ENCODE measurements at regions of chr6 and their contacts with region 1.

Region 1: GRCh38 chr6:30533460-30534294 is 22.6 kb downstream of the GNL1 start:
- H3K4me3 Mint-ChIP-seq: no peak overlapping the region
- H3K27ac Mint-ChIP-seq: no peak overlapping the region
- H3K4me1 Mint-ChIP-seq: peaks cover 30% of the 10 kb centered on the region
- H3K27me3 Mint-ChIP-seq: peaks cover 2% of the 10 kb centered on the region

Region 2: GRCh38 chr6:30497714-30498113 is 36.0 kb before region 1 on chr6:
- intact Hi-C with region 1: loop called (anchors 2 kb)
- H3K4me3 Mint-ChIP-seq: no peak overlapping the region
- H3K27ac Mint-ChIP-seq: peak overlapping the region; percentile 75
- H3K4me1 Mint-ChIP-seq: peaks cover 59% of the 10 kb centered on the region
- H3K27me3 Mint-ChIP-seq: no peaks in the 10 kb centered on the region

Region 3: DNA sequence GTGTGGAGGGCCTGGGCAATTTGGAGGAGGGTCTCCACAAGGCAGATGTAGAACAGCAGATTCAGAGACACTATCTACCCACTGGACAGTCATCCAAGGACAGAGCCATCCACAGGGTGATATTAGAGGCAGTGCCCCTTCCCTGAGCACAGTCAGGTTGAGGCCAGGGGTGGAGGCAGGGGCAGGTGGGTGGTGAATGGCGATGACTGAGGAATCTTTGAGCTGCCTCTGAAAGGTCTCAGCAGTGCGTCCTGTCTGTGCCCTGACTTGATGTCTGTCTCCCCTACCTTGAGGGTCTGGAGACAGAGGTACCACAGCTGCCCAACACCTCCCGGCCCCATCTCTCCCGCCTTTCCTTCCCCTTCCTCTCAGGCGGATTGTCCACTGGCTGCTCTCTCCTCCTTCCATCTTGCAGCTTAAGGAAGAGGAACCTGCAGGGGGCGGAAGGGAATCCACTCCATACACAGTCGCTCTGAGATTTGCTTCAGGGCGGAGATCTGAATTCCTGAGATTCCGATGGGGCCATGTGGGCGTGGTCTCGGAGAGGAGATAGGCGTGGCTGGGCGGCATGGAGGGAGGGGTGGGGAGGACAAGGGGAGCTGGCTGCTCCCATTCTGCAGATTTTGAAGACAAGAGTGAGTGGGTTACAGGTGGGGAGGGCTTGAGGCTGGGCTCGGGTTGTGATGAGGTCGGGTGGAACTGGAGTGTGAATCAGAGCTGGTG is 408.8 kb after region 1 on chr6:
- intact Hi-C with region 1: no loop called
- H3K4me3 Mint-ChIP-seq: no peak overlapping the region
- H3K27ac Mint-ChIP-seq: no peak overlapping the region
- H3K4me1 Mint-ChIP-seq: peaks cover 7% of the 10 kb centered on the region
- H3K27me3 Mint-ChIP-seq: peaks cover 62% of the 10 kb centered on the region